ENCODE measurements at regions of chr14 and their contacts with region 1.

Region 1: DNA sequence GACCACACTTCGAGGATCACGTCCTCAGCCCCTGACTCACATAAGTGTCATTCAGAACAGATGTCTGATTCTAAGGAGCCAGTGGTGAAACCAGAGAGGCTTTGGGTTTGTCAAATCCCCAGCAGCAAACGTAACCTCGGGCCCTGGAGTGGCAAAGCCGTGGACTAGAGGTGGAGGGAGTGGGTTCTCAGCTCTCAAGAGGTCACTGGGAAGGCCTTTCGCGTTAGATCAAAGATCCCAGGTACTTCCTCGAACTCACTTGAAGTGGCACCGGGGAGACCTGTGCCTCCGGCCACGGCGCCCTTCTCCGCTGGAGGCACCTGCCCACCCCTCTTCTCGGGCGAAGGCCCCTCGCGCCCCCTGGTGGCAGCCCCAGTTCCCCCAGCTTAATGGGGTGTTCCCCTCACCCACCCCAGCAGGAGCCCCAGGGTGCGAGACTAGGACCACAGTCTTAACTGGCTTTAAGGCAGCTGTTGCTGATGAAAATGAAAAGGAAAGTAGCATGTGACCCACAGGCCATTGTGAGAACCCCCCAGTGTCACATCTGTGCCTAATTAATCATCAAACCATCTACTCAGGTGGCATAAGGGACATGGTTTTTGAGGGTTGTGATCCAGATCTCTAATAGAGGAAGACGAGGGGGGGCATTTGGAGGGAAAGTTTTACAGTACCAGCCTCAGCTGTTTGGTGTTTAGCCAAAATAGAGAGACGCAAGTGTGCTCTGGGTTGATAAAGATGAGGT is 672 bp upstream of the ESR2 start:
- DNase-seq: peak; percentile 78
- H3K4me3 ChIP-seq: peak overlapping the region; percentile 45
- H3K27ac ChIP-seq: no peak overlapping the region
- H3K4me1 ChIP-seq: peaks cover 9% of the 10 kb centered on the region
- H3K27me3 ChIP-seq: no peaks in the 10 kb centered on the region
- CTCF ChIP-seq: peak; percentile 96

Region 2: DNA sequence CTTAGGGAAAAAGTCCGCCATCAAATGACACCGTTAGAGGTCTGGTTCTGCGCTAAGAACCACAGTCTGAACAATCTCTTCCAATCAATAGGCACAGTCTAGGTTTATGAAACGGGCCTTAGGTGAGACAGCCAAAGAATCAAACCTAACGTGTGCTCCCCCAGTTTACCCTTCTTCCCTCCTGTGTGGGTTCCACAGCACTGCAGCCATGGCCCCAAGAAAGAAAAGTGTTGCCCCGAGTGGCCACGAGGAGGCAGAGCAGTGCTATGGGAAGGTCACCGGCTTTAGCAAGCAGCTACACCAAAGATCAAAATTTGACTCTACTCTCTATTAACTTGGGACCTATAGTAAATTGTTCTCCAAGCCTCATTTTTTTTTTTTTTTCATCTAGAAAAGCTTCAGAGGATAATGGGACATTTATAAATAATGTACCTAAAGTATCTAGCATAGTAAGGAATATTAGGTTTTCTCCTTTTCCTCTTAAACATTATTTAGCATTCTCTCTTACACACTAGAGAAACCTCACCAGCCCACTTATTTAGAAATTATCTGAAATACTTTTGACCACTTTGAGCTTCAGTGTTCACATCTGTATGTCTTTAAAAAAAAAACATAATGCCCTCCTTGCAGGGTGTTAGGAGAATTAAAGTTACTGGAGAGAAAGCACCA is 905.9 kb before region 1 on chr14:
- CTCF ChIA-PET with region 1: no interaction called
- POLR2A ChIA-PET with region 1: no interaction called
- intact Hi-C with region 1: loop called (anchors 10 kb)
- DNase-seq: peak; percentile 69
- H3K4me3 ChIP-seq: no peak overlapping the region
- H3K27ac ChIP-seq: no peak overlapping the region
- H3K4me1 ChIP-seq: no peaks in the 10 kb centered on the region
- H3K27me3 ChIP-seq: no peaks in the 10 kb centered on the region
- CTCF ChIP-seq: peak; percentile 86

Region 3: DNA sequence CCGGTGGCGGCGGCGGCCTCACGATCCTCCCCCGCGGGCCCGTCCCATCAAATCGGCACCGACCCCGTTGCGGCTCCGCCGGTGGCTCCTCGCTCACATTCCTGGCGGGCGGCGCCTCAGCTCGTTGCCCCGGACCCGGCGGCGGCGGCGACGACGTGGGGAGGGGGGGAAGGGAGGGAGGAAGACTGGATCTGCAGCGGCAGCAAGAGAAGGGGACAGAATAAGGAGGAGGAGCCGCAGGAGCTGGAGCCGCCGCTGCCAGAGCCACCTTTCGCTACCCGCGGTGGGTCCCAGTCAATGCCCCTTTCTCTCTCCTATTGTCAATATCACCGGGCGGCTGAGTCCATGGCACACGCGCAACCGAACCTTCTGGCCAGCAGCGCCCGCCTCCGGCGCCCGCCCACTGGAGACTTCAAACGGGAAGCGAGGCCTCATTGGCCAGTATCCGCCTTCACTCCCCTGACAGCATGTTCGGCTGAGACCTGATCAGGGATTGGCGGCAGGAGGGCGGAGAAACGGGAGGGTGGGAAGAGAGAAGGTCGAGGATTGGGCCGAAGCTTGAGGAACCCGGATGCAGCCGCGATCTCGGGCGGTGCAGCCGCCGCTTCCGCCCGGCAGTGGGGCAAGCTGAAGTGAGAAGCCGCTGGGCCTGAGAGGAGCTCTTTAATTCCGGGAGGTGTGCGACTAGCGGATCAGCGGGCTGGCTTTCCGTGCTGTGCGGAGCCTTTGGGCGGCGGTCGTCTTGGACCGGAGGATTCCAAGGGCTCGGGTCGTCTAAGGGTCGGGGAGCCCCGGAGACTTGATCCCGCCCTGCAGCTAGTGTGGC is 751.6 kb before region 1 on chr14 and contains the start of gene PPP2R5E:
- CTCF ChIA-PET with region 1: no interaction called
- POLR2A ChIA-PET with region 1: no interaction called
- intact Hi-C with region 1: loop called (anchors 5 kb)
- DNase-seq: peak; percentile 100
- H3K4me3 ChIP-seq: peak within 1 kb of the TSS; percentile 80
- H3K27ac ChIP-seq: peak within 1 kb of the TSS; percentile 86
- H3K4me1 ChIP-seq: peaks cover 6% of the 10 kb centered on the region
- H3K27me3 ChIP-seq: no peaks in the 10 kb centered on the region
- CTCF ChIP-seq: no peak
- total RNA-seq, gene PPP2R5E: 64.3 and 66.0 TPM in 2 replicates

Region 4: GRCh38 chr14:63795532-63795931 is 499.3 kb before region 1 on chr14:
- CTCF ChIA-PET with region 1: interaction called, 3 read pairs
- POLR2A ChIA-PET with region 1: no interaction called
- intact Hi-C with region 1: loop called (anchors 5 kb)
- DNase-seq: no peak
- H3K4me3 ChIP-seq: no peak overlapping the region
- H3K27ac ChIP-seq: no peak overlapping the region
- H3K4me1 ChIP-seq: peaks cover 6% of the 10 kb centered on the region
- H3K27me3 ChIP-seq: no peaks in the 10 kb centered on the region
- CTCF ChIP-seq: no peak

Region 5: GRCh38 chr14:64720131-64720576 is 425.3 kb after region 1 on chr14:
- CTCF ChIA-PET with region 1: no interaction called
- POLR2A ChIA-PET with region 1: no interaction called
- intact Hi-C with region 1: no loop called
- DNase-seq: no peak
- H3K4me3 ChIP-seq: no peak overlapping the region
- H3K27ac ChIP-seq: peak overlapping the region; percentile 34
- H3K4me1 ChIP-seq: peaks cover 46% of the 10 kb centered on the region
- H3K27me3 ChIP-seq: no peaks in the 10 kb centered on the region
- CTCF ChIP-seq: no peak

Region 6: GRCh38 chr14:64758691-64759584 is 464.1 kb after region 1 on chr14:
- CTCF ChIA-PET with region 1: no interaction called
- POLR2A ChIA-PET with region 1: no interaction called
- intact Hi-C with region 1: no loop called
- DNase-seq: no peak
- H3K4me3 ChIP-seq: no peak overlapping the region
- H3K27ac ChIP-seq: no peak overlapping the region
- H3K4me1 ChIP-seq: peaks cover 34% of the 10 kb centered on the region
- H3K27me3 ChIP-seq: no peaks in the 10 kb centered on the region
- CTCF ChIP-seq: no peak

Measured in A673 (cell line).